Posterior cingulate gyrus (tissue), 11 donors: ENCODE measurements at regions of chr22 and their contacts with region 1.

Region 1: DNA sequence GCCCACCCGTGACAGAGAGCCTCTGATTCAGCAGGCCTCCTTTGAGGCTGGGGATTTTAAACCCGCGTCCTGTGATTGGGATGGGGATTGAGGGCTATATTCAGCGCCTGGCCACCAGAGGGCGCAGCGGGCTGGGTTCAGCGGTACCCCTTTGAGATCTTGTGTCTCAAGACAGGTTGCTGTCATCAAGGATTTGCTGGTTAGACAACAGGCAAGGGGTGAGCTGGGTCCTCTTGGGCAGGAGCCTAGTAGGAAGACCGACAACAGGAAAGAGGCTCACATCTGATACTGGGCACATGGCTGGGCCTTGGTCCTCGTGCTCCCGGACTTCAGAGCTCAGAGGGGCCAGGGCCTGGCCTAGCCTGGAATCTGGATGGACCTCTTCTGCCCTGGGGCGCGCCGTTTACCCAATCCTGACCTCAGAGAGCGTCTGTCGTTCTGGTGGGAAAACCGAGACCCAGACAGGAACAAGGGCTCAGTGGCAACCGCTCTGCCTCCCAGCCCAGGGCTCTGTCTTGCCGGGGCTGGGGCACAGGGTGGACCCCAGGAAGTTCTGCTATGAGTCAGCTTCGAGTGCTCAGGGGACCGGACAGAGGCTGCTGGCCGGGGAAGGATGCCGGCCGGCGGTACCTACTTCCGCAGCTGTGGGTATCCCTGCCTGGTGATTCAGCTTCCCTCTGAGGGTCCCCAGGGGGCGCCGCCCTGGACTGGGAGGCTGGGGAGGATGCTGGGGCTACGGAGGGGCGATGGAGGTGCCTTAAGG is 929 bp upstream of the SLC35E4 start:
- DNase-seq: peak; percentile 78 to 99 (median 93)

Region 2: GRCh38 chr22:30694171-30694639 is 59.6 kb after region 1 on chr22:
- intact Hi-C with region 1: loop called (anchors 2 kb)
- DNase-seq: peak; percentile 49 to 94 (median 62)

Region 3: GRCh38 chr22:30754971-30755756 is 120.5 kb after region 1 on chr22:
- intact Hi-C with region 1: loop called (anchors 1 kb)
- DNase-seq: peak in 8 of 10 donors; percentile 52 to 94 (median 68)

Region 4: GRCh38 chr22:30920407-30920806 is 285.8 kb after region 1 on chr22:
- intact Hi-C with region 1: loop called (anchors 1 kb)
- DNase-seq: peak; percentile 66 to 97 (median 88)